ENCODE measurements at regions of chr5 and their contacts with region 1.

Region 1: GRCh38 chr5:14595189-14595588 is 13.6 kb downstream of the OTULINL start:
- DNase-seq: peak; percentile 66
- H3K4me3 Mint-ChIP-seq: peak overlapping the region; percentile 68
- H3K27ac Mint-ChIP-seq: peak overlapping the region; percentile 93
- H3K4me1 Mint-ChIP-seq: peaks cover 83% of the 10 kb centered on the region
- H3K27me3 Mint-ChIP-seq: no peaks in the 10 kb centered on the region

Region 2: GRCh38 chr5:14415024-14415697 is 180.0 kb before region 1 on chr5:
- intact Hi-C with region 1: loop called (anchors 1 kb)
- DNase-seq: no peak
- H3K4me3 Mint-ChIP-seq: peak overlapping the region; percentile 43
- H3K27ac Mint-ChIP-seq: peak overlapping the region; percentile 91
- H3K4me1 Mint-ChIP-seq: peaks cover 69% of the 10 kb centered on the region
- H3K27me3 Mint-ChIP-seq: peaks cover 1% of the 10 kb centered on the region

Region 3: GRCh38 chr5:14581333-14581890 is 13.8 kb before region 1 on chr5 and contains the start of gene OTULINL:
- intact Hi-C with region 1: loop called (anchors 1 kb)
- DNase-seq: peak; percentile 78
- H3K4me3 Mint-ChIP-seq: peak within 1 kb of the TSS; percentile 78
- H3K27ac Mint-ChIP-seq: peak within 1 kb of the TSS; percentile 28
- H3K4me1 Mint-ChIP-seq: peaks cover 23% of the 10 kb centered on the region
- H3K27me3 Mint-ChIP-seq: peaks cover 22% of the 10 kb centered on the region
- total RNA-seq, gene OTULINL: 17.0 and 20.9 TPM in 2 replicates

Region 4: GRCh38 chr5:14706615-14707021 is 111.4 kb after region 1 on chr5:
- intact Hi-C with region 1: loop called (anchors 2 kb)
- DNase-seq: peak; percentile 46
- H3K4me3 Mint-ChIP-seq: peak overlapping the region; percentile 79
- H3K27ac Mint-ChIP-seq: peak overlapping the region; percentile 99
- H3K4me1 Mint-ChIP-seq: peaks cover 76% of the 10 kb centered on the region
- H3K27me3 Mint-ChIP-seq: no peaks in the 10 kb centered on the region

Region 5: GRCh38 chr5:14790220-14790619 is 195.0 kb after region 1 on chr5:
- intact Hi-C with region 1: no loop called
- DNase-seq: no peak
- H3K4me3 Mint-ChIP-seq: no peak overlapping the region
- H3K27ac Mint-ChIP-seq: no peak overlapping the region
- H3K4me1 Mint-ChIP-seq: peaks cover 21% of the 10 kb centered on the region
- H3K27me3 Mint-ChIP-seq: no peaks in the 10 kb centered on the region

Region 6: DNA sequence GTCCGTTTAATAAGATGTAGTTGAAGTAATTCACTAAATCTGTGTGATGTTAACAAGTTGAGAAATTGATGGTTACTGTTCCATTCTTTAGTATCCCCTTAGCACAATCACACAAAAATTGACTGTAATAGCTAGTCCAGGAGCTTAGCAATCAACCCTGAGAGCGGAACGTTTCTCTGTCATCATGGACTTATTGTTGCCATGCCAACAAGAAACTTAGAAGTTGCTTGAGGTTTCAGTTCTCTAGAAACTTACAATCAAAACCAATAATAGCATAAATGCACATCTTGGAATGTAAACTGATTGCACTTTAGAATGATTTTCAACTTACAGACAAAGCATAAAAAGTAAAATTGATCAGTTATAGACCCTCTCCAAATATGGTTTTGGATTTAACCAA is 401.8 kb after region 1 on chr5:
- intact Hi-C with region 1: loop called (anchors 1 kb)
- DNase-seq: no peak
- H3K4me3 Mint-ChIP-seq: no peak overlapping the region
- H3K27ac Mint-ChIP-seq: no peak overlapping the region
- H3K4me1 Mint-ChIP-seq: peaks cover 31% of the 10 kb centered on the region
- H3K27me3 Mint-ChIP-seq: peaks cover 16% of the 10 kb centered on the region

Measured in activated T-helper 2 cell treated with anti-CD3 and anti-CD28 coated beads, Interferon-gamma antibody, Interleukin-2, Interleukin-4, amounts not matched to agents 10 μg/mL and 5 μg/mL and 100 μg/mL, durations not matched to agents 14 hours and 24 hours and 36 hours (primary cell).